AG04449 (cell line): ENCODE measurements at regions of chr12 and their contacts with region 1.

Region 1: GRCh38 chr12:51923501-51924271 is 16.4 kb downstream of the ACVRL1 start:
- DNase-seq: no peak
- H3K4me3 ChIP-seq: no peak overlapping the region
- CTCF ChIP-seq: peak; percentile 96

Region 2: DNA sequence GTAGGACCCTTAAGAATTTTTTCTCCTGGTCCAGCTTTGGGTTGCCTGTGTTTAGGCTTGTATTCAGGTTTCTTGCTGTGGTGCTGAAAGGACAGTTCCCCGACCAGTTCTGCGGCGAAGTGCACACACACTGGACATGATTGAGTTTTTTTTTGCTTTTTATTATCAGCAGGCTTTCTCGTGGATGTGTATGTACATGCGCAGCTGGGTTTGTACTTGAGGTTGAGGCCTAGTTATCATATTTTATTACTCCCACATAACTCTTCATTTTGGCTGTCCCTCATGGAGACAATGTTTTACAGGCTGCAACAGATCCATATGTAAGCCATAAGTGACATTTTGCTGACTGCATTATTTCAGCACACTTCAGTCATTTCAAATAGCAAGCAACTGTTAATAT is 330.1 kb before region 1 on chr12:
- CTCF ChIA-PET with region 1: no interaction called
- POLR2A ChIA-PET with region 1: no interaction called
- DNase-seq: no peak
- H3K4me3 ChIP-seq: no peak overlapping the region
- CTCF ChIP-seq: no peak

Region 3: DNA sequence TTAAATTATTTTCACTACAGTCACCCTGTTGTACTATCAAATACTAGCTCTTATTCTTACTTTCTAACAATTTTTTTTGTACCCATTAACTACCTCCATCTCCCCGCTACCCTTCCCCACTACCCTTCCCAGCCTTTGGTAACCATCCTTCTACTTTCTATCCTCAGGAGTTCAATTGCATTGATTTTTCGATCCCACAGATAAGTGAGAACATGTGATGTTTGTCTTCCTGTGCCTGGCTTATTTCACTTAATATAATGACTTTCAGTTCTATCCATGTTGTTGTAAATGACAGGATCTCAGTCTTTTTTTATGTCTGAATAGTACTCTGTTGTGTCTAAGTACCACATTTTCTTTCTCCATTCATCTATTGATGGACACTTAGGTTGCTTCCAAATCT is 192.9 kb before region 1 on chr12:
- CTCF ChIA-PET with region 1: no interaction called
- POLR2A ChIA-PET with region 1: no interaction called
- DNase-seq: no peak
- H3K4me3 ChIP-seq: no peak overlapping the region
- CTCF ChIP-seq: no peak

Region 4: DNA sequence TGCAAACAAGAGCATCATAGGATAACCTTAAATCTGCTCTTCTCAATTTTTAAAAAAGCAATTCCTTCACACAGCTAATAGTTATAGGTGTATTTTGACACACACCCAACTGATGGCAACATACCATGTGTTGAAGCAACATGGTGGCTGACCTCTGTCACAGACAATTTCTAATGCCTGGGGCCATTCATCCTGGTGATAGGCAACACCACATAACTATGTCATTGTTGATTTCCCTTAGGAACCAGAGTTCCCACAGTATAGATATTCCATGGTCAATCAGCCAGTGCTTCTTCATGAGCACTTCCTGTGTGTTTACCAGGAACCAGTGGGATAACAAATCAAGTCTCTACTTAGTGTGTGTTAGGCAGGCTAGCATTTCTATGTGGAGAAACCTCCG is 163.5 kb before region 1 on chr12:
- CTCF ChIA-PET with region 1: no interaction called
- POLR2A ChIA-PET with region 1: no interaction called
- DNase-seq: no peak
- H3K4me3 ChIP-seq: no peak overlapping the region
- CTCF ChIP-seq: no peak

Region 5: DNA sequence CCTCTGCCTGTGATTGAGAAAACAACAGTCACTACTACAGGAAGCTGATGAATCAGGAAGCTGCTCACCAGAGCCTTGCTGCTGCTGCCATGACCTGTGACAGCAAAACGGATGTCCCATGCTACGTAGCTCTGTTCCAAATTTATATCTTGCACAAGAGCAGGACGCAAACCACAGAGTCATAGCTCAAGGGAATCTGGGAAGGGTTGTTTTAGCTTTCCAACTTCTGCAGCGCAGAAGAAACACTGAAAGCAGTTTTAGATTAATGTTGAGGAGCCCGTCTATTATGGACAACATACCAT is 37.7 kb before region 1 on chr12:
- CTCF ChIA-PET with region 1: interaction called, 621 read pairs
- POLR2A ChIA-PET with region 1: no interaction called
- DNase-seq: peak; percentile 88
- H3K4me3 ChIP-seq: no peak overlapping the region
- CTCF ChIP-seq: no peak

Region 6: GRCh38 chr12:51951199-51951842 is 27.6 kb after region 1 on chr12 and contains the start of gene ACVR1B:
- CTCF ChIA-PET with region 1: interaction called, 31 read pairs
- POLR2A ChIA-PET with region 1: no interaction called
- DNase-seq: no peak
- H3K4me3 ChIP-seq: peak within 1 kb of the TSS; percentile 83
- CTCF ChIP-seq: no peak

Region 7: DNA sequence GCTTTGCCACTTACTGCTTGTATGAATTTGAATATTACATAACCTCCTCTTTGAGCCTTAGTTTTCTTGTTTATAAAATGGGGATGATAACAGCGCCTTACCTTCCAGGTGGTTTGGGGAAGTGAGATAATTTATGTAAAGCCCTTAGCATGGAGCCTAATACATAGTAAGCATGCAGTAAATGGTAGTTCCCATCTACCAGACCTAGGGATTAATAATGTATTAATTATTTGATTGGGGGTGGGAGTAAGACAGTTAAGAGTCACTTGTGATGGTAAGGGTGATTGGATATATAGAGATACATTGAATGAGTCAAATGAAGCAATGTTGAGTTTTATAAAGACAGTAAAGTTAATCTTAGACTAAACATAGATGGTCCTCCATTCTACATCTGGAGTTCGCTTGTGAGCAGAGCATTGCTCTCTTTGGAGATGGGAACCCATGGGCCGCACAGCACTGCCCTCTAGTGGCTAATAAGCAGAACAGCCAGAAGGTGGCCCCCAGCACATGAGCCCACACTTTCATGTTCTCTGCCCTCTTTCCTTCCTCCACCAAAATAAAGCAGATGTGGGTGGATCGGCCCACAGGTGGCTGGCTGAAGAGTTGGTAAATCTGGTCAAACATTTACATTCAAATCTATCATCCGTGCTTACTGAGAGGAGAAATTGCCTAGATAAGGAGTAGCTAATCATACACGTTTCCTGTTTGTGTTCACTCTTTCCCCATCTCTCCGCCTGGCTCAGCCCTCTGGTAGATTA is 56.5 kb after region 1 on chr12:
- CTCF ChIA-PET with region 1: interaction called, 51 read pairs
- POLR2A ChIA-PET with region 1: no interaction called
- DNase-seq: no peak
- H3K4me3 ChIP-seq: no peak overlapping the region
- CTCF ChIP-seq: peak; percentile 91

Region 8: DNA sequence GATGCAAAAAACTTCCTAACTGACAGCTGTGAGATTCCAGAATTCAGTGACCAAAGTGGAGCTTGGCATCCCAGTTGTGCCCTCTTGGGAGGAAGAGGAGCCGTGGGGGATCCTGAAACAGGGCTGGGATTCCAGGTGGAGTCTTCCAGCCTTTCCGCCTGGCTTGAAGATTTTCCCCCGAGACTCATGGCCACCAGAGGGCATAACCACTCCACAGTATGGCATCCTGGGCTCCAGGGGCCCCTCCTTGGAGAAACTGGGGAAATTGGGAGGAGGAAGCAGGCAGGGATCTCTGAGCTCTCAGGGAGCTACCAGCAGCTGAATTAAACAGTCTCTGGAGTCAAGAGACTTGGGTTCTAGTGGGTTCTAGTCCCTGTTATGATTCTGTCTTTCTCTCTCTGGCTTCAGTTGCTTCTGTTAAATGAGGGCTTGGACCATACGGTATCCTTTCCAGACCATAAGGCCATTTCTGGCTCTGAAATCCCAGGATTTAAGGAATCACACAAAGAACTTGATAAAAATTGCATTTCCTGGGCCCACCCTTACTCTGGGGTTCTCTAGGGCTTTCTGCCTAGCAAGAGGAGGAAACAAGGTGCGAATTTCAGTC is 80.5 kb after region 1 on chr12:
- CTCF ChIA-PET with region 1: interaction called, 11 read pairs
- POLR2A ChIA-PET with region 1: no interaction called
- DNase-seq: no peak
- H3K4me3 ChIP-seq: no peak overlapping the region
- CTCF ChIP-seq: peak; percentile 79

Region 9: GRCh38 chr12:52091869-52092268 is 168.2 kb after region 1 on chr12:
- CTCF ChIA-PET with region 1: no interaction called
- POLR2A ChIA-PET with region 1: no interaction called
- DNase-seq: no peak
- H3K4me3 ChIP-seq: no peak overlapping the region
- CTCF ChIP-seq: no peak